ENCODE measurements at regions of chr12 and their contacts with region 1.

Region 1: DNA sequence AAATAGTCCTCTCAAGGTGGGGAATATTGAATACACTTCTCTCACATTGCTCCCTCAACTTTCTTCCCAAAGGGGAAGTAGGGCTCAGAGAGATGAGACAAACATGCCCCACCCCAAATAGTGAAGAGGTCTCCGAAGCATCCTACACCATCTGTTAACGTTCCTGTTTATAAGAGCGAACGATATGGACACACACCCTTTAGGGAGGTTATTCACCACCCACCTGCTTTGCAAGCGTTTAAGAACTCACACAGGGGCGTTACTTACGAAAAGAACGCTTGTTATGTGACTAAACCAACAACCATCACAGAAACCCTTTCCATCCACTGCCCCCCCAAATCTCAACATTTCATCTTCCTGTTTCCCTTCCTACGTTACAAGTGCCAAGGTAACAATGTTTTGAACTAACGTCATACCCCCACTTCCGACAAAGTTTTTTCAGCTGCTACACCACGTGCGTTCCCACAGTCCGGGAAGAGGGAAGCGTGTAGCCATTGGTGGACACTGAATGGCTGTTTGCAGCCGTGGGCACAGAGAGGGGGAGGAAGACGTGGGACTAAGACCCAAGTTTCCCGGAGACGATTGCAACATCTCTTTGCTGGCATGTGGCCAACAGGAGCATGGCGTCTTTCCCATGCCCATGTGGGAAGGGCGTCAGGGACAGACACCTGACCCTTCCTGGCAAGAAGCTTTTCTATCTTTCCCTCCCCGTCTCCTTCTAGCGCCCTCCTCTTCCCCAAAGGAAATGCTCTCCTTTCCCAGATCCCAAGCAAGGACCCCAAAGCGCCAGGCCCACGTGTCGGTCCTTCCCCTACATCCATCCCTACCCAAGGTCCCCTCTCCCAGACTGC is 1.2 kb downstream of the YBX3 start:
- DNase-seq: peak; percentile 77
- H3K4me3 Mint-ChIP-seq: peak overlapping the region; percentile 95
- H3K27ac Mint-ChIP-seq: peak overlapping the region; percentile 94
- H3K4me1 Mint-ChIP-seq: peaks cover 30% of the 10 kb centered on the region
- H3K27me3 Mint-ChIP-seq: peaks cover 31% of the 10 kb centered on the region

Region 2: GRCh38 chr12:10052193-10052913 is 669.5 kb before region 1 on chr12:
- CTCF ChIA-PET with region 1: no interaction called
- intact Hi-C with region 1: no loop called
- DNase-seq: no peak
- H3K4me3 Mint-ChIP-seq: no peak overlapping the region
- H3K27ac Mint-ChIP-seq: no peak overlapping the region
- H3K4me1 Mint-ChIP-seq: peaks cover 6% of the 10 kb centered on the region
- H3K27me3 Mint-ChIP-seq: peaks cover 9% of the 10 kb centered on the region

Region 3: DNA sequence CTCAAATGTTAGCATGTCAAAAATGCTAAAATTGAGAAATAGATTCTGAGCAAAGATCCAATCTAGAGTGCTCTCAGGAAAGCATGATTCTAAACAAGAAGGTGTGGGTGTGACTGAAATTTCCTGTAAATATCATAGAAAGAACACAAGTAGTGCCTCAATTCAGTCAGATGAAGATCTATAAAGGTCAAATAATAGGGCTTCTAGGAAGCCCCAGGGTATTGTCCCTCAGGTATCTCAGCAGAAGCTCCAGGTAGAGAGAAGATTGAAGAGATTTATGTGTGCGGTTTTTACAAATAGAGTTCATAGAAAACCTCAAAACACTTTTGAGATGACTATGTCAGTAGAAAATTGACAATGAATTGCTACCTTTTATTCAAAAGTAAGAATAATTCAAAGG is 401.2 kb before region 1 on chr12:
- CTCF ChIA-PET with region 1: no interaction called
- intact Hi-C with region 1: loop called (anchors 5 kb)
- DNase-seq: no peak
- H3K4me3 Mint-ChIP-seq: no peak overlapping the region
- H3K27ac Mint-ChIP-seq: peak overlapping the region; percentile 2
- H3K4me1 Mint-ChIP-seq: peaks cover 28% of the 10 kb centered on the region
- H3K27me3 Mint-ChIP-seq: no peaks in the 10 kb centered on the region

Region 4: GRCh38 chr12:10613349-10614055 is 108.4 kb before region 1 on chr12 and contains the start of gene MAGOHB:
- CTCF ChIA-PET with region 1: no interaction called
- intact Hi-C with region 1: loop called (anchors 1 kb)
- DNase-seq: peak; percentile 99
- H3K4me3 Mint-ChIP-seq: peak within 1 kb of the TSS; percentile 99
- H3K27ac Mint-ChIP-seq: peak within 1 kb of the TSS; percentile 99
- H3K4me1 Mint-ChIP-seq: peaks cover 30% of the 10 kb centered on the region
- H3K27me3 Mint-ChIP-seq: peaks cover 2% of the 10 kb centered on the region
- total RNA-seq, gene MAGOHB: 58.8 to 61.1 TPM

Region 5: GRCh38 chr12:10634427-10634826 is 87.4 kb before region 1 on chr12:
- CTCF ChIA-PET with region 1: no interaction called
- intact Hi-C with region 1: no loop called
- DNase-seq: no peak
- H3K4me3 Mint-ChIP-seq: no peak overlapping the region
- H3K27ac Mint-ChIP-seq: no peak overlapping the region
- H3K4me1 Mint-ChIP-seq: no peaks in the 10 kb centered on the region
- H3K27me3 Mint-ChIP-seq: peaks cover 4% of the 10 kb centered on the region

Region 6: GRCh38 chr12:10701131-10701681 is 20.7 kb before region 1 on chr12:
- CTCF ChIA-PET with region 1: no interaction called
- intact Hi-C with region 1: loop called (anchors 1 kb)
- DNase-seq: peak; percentile 65
- H3K4me3 Mint-ChIP-seq: no peak overlapping the region
- H3K27ac Mint-ChIP-seq: peak overlapping the region; percentile 76
- H3K4me1 Mint-ChIP-seq: peaks cover 16% of the 10 kb centered on the region
- H3K27me3 Mint-ChIP-seq: no peaks in the 10 kb centered on the region

Region 7: DNA sequence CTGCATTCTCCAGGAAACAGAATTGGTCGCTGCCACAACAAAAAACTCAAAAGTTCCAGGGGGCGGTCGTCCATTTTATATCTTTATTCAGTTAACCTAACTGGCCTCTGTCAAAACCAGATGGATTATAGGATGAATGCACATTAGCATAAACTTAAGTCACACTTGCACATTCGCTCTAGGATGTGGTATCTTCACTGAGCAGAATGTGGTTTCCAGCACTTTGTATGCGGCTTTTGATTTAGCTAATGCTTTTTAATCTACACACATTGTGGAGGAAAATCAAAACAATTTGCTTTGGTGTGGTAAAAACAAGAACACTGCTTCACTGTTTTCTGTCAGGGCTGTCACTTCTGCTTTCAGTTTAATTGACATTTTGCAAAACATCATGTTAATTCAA is 260.4 kb after region 1 on chr12:
- CTCF ChIA-PET with region 1: no interaction called
- intact Hi-C with region 1: loop called (anchors 2 kb)
- DNase-seq: peak; percentile 74
- H3K4me3 Mint-ChIP-seq: no peak overlapping the region
- H3K27ac Mint-ChIP-seq: no peak overlapping the region
- H3K4me1 Mint-ChIP-seq: peaks cover 19% of the 10 kb centered on the region
- H3K27me3 Mint-ChIP-seq: peaks cover 9% of the 10 kb centered on the region

Region 8: DNA sequence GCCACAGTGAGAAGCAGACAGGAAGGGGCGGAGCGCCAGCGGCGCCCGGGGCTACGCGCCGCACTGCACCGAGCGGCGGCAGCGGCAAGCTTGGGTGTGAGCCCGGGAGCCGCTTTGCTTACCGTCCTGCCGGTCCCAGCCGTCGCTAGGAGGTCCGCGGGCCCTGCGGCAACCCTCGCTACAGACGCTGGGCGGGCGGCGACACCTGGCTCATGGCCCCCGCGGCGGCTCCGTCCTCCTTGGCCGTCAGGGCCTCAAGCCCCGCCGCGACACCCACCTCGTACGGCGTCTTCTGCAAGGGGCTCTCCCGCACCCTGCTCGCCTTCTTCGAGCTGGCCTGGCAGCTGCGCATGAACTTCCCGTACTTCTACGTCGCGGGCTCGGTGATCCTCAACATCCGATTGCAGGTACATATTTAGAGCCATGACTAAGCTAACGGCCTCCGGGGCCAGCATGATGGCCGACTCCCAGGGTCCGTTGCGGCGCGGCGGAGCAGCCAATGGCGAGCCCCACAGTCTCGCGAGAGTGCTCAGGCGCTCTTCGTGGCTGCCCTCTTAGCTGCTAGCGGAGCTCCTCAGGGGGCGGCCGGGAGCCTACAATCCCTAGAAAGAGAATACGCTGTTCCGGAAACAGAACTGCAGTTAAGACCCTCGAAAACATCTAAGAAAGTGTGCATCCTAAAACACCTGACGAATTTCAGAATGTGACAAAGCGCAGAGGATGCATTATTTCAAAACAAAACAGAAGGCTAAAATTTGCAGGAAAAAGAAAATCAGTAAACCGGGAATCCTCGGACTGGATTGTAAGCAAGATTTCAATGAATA is 449.5 kb after region 1 on chr12 and contains the start of gene SMIM10L1:
- CTCF ChIA-PET with region 1: no interaction called
- intact Hi-C with region 1: loop called (anchors 1 kb)
- DNase-seq: peak; percentile 94
- H3K4me3 Mint-ChIP-seq: peak within 1 kb of the TSS; percentile 97
- H3K27ac Mint-ChIP-seq: peak within 1 kb of the TSS; percentile 99
- H3K4me1 Mint-ChIP-seq: peaks cover 38% of the 10 kb centered on the region
- H3K27me3 Mint-ChIP-seq: no peaks in the 10 kb centered on the region
- total RNA-seq, gene SMIM10L1: 5.0 to 5.6 TPM

Measured in activated naive CD4-positive, alpha-beta T cell treated with anti-CD3 and anti-CD28 coated beads for 36 hours (primary cell).